PC-9 (cell line): ENCODE measurements at regions of chr13 and their contacts with region 1.

Region 1: DNA sequence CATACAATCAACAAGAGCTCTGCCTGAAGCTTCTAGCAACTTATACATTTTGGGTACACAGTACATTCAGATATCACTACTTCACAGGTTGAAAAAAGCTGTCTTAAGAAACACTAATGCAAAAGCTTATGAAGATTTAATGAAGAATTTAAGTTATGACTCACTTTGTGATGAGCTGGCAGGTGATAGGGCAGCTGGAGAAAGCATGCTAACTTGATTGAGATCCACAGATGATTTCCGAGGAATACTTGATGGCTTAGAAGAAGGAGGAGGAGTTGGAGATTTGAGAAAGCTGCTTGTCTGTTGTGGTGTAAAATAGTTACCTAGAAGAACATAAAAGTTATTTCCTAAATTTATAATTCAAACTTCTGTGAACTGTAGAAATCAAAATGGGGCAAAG is 23.3 kb downstream of the EXOSC8 start:
- DNase-seq: no peak
- H3K4me3 ChIP-seq: no peak overlapping the region
- H3K27ac ChIP-seq: no peak overlapping the region
- H3K4me1 ChIP-seq: no peaks in the 10 kb centered on the region
- H3K27me3 ChIP-seq: no peaks in the 10 kb centered on the region
- CTCF ChIP-seq: no peak

Region 2: GRCh38 chr13:36959456-36960116 is 64.3 kb before region 1 on chr13:
- CTCF ChIA-PET with region 1: no interaction called
- POLR2A ChIA-PET with region 1: interaction called, 16 read pairs
- intact Hi-C with region 1: no loop called
- DNase-seq: no peak
- H3K4me3 ChIP-seq: no peak overlapping the region
- H3K27ac ChIP-seq: no peak overlapping the region
- H3K4me1 ChIP-seq: no peaks in the 10 kb centered on the region
- H3K27me3 ChIP-seq: no peaks in the 10 kb centered on the region
- CTCF ChIP-seq: no peak

Region 3: GRCh38 chr13:36992340-36992739 is 31.5 kb before region 1 on chr13:
- CTCF ChIA-PET with region 1: no interaction called
- POLR2A ChIA-PET with region 1: no interaction called
- intact Hi-C with region 1: no loop called
- DNase-seq: no peak
- H3K4me3 ChIP-seq: no peak overlapping the region
- H3K27ac ChIP-seq: no peak overlapping the region
- H3K4me1 ChIP-seq: no peaks in the 10 kb centered on the region
- H3K27me3 ChIP-seq: no peaks in the 10 kb centered on the region
- CTCF ChIP-seq: no peak

Region 4: DNA sequence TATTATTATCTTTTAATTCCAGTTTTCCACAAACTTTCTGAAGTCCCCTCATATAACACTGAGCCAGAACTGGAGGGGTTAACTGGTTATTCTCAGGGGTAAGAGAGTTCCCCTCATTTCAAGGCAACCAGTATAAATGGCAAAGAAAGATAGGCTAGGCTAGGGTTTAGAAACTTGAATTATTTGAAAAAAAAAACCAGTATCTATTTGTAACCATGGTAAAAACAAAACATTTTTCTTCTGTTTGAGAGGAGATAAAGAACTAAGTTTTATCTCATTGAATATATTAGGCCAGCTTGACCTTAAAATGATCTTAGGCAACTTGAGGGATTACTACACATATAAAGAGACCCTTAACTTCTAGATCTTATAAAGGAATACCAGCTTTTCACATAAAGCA is 16.0 kb after region 1 on chr13:
- CTCF ChIA-PET with region 1: no interaction called
- POLR2A ChIA-PET with region 1: no interaction called
- intact Hi-C with region 1: loop called (anchors 2 kb)
- DNase-seq: no peak
- H3K4me3 ChIP-seq: no peak overlapping the region
- H3K27ac ChIP-seq: no peak overlapping the region
- H3K4me1 ChIP-seq: no peaks in the 10 kb centered on the region
- H3K27me3 ChIP-seq: no peaks in the 10 kb centered on the region
- CTCF ChIP-seq: no peak

Region 5: GRCh38 chr13:37918751-37919150 is 894.9 kb after region 1 on chr13:
- CTCF ChIA-PET with region 1: no interaction called
- POLR2A ChIA-PET with region 1: no interaction called
- intact Hi-C with region 1: no loop called
- DNase-seq: no peak
- H3K4me3 ChIP-seq: no peak overlapping the region
- H3K27ac ChIP-seq: no peak overlapping the region
- H3K4me1 ChIP-seq: no peaks in the 10 kb centered on the region
- H3K27me3 ChIP-seq: no peaks in the 10 kb centered on the region
- CTCF ChIP-seq: no peak